SK-N-SH (cell line): ENCODE measurements at regions of chr12 and their contacts with region 1.

Region 1: DNA sequence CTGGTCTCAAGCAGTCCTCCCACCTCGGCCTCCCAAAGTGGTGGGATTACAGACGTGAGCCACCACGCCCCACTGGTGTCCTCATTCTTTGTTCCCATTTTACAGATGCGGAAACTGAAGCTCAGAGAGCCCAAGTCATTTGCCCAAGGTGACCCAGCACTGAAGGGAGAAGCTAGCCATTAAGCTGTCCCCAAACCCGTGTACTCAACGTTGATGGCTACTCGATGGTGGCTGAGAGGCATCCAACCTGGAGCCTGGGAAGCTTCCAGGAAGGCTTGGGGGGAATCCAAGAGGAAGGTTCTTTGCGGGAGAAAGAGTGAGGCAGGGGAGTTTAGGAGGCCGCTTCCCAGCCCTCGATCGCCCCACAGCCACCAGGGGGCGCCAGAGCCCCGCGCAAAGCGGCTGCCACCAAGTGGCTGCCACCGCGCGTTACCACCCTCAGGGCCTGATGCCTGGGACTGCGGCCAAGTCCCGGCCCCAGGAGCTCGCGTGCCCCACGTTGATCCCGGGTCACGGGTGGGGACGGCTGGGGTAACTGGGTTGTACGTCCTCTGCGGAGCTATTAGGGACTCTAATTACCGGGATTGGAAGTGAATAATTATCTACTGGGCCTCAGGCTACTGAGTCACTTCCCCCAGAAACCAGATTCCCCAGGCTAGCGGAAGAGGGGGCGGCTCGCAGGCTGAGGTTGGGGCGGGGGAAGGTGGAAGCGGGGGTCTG is 8.8 kb upstream of the SH2B3 start:
- DNase-seq: peak; percentile 92
- H3K4me3 ChIP-seq: peak overlapping the region; percentile 30 to 63
- H3K27ac ChIP-seq: no peak overlapping the region; a peak in 1 of 4 replicates
- H3K4me1 ChIP-seq: peaks cover 0 to 9% of the 10 kb centered on the region in 2 experiments; a peak in 2 of 4 replicates
- H3K27me3 ChIP-seq: no peaks in the 10 kb centered on the region
- CTCF ChIP-seq: peak; percentile 97
- EP300 ChIP-seq: peak in 1 of 2 experiments; percentile 8; a peak in 1 of 4 replicates
- RAD21 ChIP-seq: peak; percentile 91

Region 2: DNA sequence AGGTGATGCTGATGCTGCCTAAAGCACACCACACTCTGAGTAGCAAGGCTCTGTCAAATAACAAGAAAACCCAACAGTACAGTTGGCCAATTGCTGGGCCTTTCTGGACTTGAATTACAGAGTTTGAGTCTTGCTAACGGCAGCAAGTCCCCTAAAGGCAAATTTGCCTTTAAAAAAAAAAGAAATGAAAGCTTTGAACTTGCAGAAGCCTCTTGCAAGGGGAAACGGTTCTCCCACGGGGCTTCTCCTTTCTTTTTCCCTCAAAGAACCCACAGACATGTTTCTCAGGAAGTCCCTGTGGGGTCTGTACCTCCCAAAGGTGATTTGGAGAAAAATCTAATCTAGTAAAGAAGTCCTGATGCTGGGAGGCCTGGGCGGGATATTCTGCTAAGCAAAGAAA is 285.2 kb before region 1 on chr12:
- CTCF ChIA-PET with region 1: no interaction called
- POLR2A ChIA-PET with region 1: no interaction called
- DNase-seq: no peak
- H3K4me3 ChIP-seq: no peak overlapping the region
- H3K27ac ChIP-seq: no peak overlapping the region
- H3K4me1 ChIP-seq: no peaks in the 10 kb centered on the region
- H3K27me3 ChIP-seq: no peaks in the 10 kb centered on the region
- CTCF ChIP-seq: no peak
- EP300 ChIP-seq: no peak
- RAD21 ChIP-seq: no peak

Region 3: DNA sequence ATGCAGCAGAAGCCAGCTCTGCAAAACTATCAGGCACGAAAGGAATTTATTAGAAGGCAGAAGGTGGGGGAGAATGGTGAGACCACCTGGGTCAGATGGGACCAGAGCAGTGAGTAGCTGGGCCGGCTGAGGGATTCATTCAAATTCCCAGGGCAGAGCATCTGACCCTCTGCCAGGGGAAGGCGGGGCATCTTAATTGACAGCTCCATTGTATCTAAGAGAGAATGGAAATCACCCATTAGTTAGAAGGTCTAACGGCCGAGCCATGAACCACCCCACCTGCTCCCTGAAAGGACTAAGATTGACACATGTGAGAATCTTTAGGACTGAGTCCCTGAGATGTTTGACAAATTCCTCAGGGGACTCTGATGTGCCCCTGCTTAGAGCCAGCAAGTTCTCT is 111.7 kb before region 1 on chr12:
- CTCF ChIA-PET with region 1: no interaction called
- POLR2A ChIA-PET with region 1: no interaction called
- DNase-seq: no peak
- H3K4me3 ChIP-seq: no peak overlapping the region
- H3K27ac ChIP-seq: no peak overlapping the region
- H3K4me1 ChIP-seq: no peaks in the 10 kb centered on the region
- H3K27me3 ChIP-seq: no peaks in the 10 kb centered on the region
- CTCF ChIP-seq: no peak
- EP300 ChIP-seq: no peak
- RAD21 ChIP-seq: no peak

Region 4: GRCh38 chr12:111339321-111339938 is 57.5 kb before region 1 on chr12:
- CTCF ChIA-PET with region 1: no interaction called
- POLR2A ChIA-PET with region 1: no interaction called
- DNase-seq: no peak
- H3K4me3 ChIP-seq: no peak overlapping the region
- H3K27ac ChIP-seq: no peak overlapping the region
- H3K4me1 ChIP-seq: no peaks in the 10 kb centered on the region
- H3K27me3 ChIP-seq: no peaks in the 10 kb centered on the region; the same call in 1 of the 2 replicates
- CTCF ChIP-seq: no peak
- EP300 ChIP-seq: no peak
- RAD21 ChIP-seq: no peak

Region 5: DNA sequence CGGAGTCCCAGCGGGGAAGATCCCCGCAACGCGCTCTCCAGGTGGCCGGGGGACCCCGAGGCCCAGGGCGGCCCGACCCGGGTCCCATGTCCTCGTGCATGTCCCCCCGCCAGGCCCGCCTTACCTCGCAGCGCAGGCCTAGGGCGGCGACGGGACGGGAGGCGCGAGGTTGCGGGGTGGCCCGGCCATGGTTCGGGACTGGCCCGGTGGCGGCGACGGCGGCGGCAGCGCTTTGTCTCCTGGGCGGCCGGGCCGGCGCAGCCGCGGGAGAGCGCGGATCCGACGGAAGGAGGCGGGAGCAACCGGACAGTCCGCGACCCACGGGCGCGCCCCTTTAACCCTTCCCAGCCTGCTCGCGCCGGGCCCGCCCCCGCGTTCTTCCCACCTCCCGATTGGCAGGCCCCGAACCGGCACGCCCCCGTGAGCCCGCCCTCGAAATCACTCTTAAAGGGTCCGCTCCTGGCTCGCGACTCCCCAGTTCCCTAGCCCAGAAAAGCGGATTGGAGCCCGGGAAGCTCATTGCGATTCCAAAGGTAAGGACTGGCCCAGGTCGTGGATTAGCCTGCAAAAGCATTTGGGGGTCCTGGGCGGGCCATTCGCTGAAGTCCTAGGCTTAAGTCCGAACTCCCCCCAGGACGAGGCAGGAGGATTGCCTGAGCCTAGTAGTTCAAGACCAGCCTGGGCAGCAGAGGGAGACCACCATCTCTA is 27.9 kb before region 1 on chr12 and contains the start of gene PHETA1:
- CTCF ChIA-PET with region 1: interaction called, 22 read pairs
- POLR2A ChIA-PET with region 1: no interaction called
- DNase-seq: peak; percentile 97
- H3K4me3 ChIP-seq: peak within 1 kb of the TSS; percentile 85 to 96
- H3K27ac ChIP-seq: peak within 1 kb of the TSS in 1 of 2 experiments; percentile 64; a peak in 2 of 4 replicates
- H3K4me1 ChIP-seq: peaks cover 0 to 16% of the 10 kb centered on the region in 2 experiments; a peak in 1 of 4 replicates
- H3K27me3 ChIP-seq: no peaks in the 10 kb centered on the region
- CTCF ChIP-seq: no peak
- EP300 ChIP-seq: peak in 1 of 2 experiments; percentile 14; a peak in 1 of 4 replicates
- RAD21 ChIP-seq: no peak
- polyA plus RNA-seq, gene PHETA1: 7.3 and 8.1 TPM in 2 replicates

Region 6: GRCh38 chr12:111428728-111429175 is 31.9 kb after region 1 on chr12:
- CTCF ChIA-PET with region 1: interaction called, 23 read pairs
- POLR2A ChIA-PET with region 1: no interaction called
- DNase-seq: no peak
- H3K4me3 ChIP-seq: no peak overlapping the region
- H3K27ac ChIP-seq: no peak overlapping the region
- H3K4me1 ChIP-seq: peaks cover 11 to 38% of the 10 kb centered on the region in 2 experiments; a peak in 2 of 4 replicates
- H3K27me3 ChIP-seq: no peaks in the 10 kb centered on the region
- CTCF ChIP-seq: no peak
- EP300 ChIP-seq: no peak
- RAD21 ChIP-seq: no peak

Region 7: GRCh38 chr12:111462210-111462769 is 65.4 kb after region 1 on chr12:
- CTCF ChIA-PET with region 1: interaction called, 618 read pairs
- POLR2A ChIA-PET with region 1: no interaction called
- DNase-seq: no peak
- H3K4me3 ChIP-seq: no peak overlapping the region; a peak in 1 of 4 replicates
- H3K27ac ChIP-seq: peak overlapping the region; percentile 24 to 95; a peak in 3 of 4 replicates
- H3K4me1 ChIP-seq: peaks cover 0 to 13% of the 10 kb centered on the region in 2 experiments; a peak in 2 of 4 replicates
- H3K27me3 ChIP-seq: no peaks in the 10 kb centered on the region
- CTCF ChIP-seq: no peak
- EP300 ChIP-seq: no peak; a peak in 1 of 4 replicates
- RAD21 ChIP-seq: no peak

Region 8: DNA sequence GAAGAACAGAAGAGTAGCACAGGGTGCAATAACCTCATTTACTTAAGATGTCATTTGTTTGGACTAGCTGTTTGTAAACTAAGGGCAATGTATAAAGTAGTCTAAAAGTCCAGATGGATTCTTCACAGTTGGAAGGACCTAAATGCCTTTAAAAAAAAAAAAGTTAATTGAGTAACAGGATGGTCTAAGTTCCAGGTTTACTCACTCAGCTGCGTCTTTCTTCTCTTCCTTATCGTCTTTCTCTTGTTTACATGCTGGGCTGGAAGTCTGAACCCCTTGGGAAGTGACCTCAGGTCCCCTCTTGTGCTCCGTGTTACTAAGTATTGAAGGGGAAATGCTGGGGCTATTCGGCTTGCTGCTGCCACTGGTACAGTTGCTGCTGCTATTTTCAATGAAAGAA is 91.4 kb after region 1 on chr12:
- CTCF ChIA-PET with region 1: interaction called, 16 read pairs
- POLR2A ChIA-PET with region 1: no interaction called
- DNase-seq: no peak
- H3K4me3 ChIP-seq: no peak overlapping the region
- H3K27ac ChIP-seq: no peak overlapping the region
- H3K4me1 ChIP-seq: no peaks in the 10 kb centered on the region
- H3K27me3 ChIP-seq: no peaks in the 10 kb centered on the region
- CTCF ChIP-seq: no peak
- EP300 ChIP-seq: no peak
- RAD21 ChIP-seq: no peak

Region 9: DNA sequence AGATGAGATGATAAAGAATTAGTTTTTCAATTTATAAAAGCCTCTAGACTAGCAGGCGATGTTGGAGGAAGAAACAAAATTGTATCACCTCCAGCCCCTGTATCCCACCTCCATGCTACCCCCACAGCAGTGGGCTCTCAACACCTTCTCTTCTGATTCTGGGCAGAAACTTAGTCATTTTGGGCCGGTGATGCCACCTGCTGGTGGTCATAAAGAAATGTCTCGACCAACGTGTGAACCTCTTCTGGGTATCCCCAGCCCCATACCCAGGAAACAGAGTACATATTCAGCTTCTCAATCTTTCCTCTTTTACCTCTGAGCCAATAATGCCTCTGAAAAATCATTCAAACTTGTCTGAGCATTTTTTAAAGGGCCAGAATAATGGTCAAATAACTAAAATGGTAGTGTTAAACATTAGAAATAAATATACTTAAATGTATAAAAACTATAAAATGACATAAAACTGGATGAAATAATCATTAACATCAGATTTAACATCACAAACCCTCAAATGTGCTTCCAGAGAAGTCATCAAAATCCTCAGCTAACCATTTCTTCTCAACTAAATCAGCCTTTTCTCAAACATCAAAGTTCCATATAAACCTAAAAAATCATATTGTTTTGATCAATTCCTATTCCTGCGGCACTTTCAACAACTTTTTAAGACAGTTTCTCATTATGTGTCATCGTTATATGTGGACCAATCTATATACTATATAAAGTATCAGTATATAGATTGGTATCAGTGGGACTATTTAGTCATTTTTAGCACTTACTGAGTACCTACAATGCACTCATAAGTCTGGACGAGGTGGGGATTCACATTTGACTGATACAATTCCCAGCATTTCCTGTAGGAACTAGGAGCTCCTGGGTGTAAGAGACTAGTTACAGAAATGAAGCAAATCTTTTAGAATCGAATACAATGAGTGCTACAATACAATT is 132.8 kb after region 1 on chr12:
- CTCF ChIA-PET with region 1: interaction called, 59 read pairs
- POLR2A ChIA-PET with region 1: no interaction called
- DNase-seq: peak; percentile 78
- H3K4me3 ChIP-seq: no peak overlapping the region; a peak in 1 of 4 replicates
- H3K27ac ChIP-seq: 0 out of 4 replicates have a peak overlapping the region, but pooled peaks of 1 of the 2 experiments have one; percentile 12
- H3K4me1 ChIP-seq: no peaks in the 10 kb centered on the region
- H3K27me3 ChIP-seq: no peaks in the 10 kb centered on the region
- CTCF ChIP-seq: peak; percentile 80
- EP300 ChIP-seq: no peak
- RAD21 ChIP-seq: peak; percentile 68